ENCODE measurements at regions of chr10 and their contacts with region 1.

Region 1: GRCh38 chr10:95246579-95247051 is 44.2 kb downstream of the PDLIM1 start:
- H3K4me3 ChIP-seq: no peak overlapping the region
- H3K27ac ChIP-seq: no peak overlapping the region
- H3K4me1 ChIP-seq: no peaks in the 10 kb centered on the region
- CTCF ChIP-seq: peak; percentile 69

Region 2: DNA sequence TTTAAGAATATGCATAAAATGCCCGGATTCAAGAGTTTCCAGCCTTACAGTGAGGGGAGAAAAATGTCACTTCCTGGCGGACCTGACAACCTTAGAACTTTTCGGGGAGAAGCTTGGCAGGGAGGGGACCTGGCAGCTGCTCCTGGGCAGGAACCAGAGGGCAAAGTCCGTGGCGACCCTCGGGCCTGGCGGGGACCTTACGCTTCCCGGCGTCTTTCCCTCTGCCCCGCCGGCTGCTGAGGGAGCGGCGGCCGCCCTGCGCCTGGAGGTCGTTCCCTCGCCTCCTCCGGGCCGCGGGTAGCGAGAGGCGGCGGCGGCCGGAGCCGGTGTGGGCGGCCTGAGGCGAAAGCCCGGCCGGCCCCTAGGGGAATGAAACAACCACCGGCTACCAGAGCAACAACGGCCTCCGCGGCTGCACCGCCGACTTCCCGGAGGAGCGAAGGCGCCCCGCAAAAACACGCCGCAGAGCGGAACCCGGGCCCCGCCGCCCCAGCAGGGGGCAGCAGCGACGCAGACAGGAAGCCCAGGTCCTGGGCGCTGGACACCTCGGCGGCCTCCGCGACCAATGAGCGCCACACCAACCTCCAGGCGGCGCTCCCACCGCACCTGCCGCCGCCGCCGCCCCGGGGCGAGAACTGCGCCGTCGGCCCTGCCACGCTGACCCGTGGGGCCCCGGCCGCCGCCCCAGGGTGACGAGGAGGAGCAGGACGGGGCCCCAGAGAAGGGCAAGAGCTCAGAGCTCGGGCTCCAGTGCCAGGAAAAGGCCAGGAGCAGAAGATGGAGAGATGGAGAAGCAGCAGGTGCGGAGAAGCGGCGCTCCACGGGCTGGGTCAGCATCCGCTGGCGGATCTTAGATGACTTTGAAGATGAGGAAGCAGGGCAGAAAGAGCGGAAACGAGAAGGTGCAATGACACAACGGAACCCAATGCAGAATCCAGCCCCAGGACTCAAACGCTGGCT is 63.1 kb before region 1 on chr10:
- CTCF ChIA-PET with region 1: interaction called, 13 read pairs
- POLR2A ChIA-PET with region 1: no interaction called
- H3K4me3 ChIP-seq: peak overlapping the region; percentile 64
- H3K27ac ChIP-seq: peak overlapping the region; percentile 68; the same call in 1 of the 2 replicates
- H3K4me1 ChIP-seq: no peaks in the 10 kb centered on the region
- CTCF ChIP-seq: peak; percentile 98

Region 3: DNA sequence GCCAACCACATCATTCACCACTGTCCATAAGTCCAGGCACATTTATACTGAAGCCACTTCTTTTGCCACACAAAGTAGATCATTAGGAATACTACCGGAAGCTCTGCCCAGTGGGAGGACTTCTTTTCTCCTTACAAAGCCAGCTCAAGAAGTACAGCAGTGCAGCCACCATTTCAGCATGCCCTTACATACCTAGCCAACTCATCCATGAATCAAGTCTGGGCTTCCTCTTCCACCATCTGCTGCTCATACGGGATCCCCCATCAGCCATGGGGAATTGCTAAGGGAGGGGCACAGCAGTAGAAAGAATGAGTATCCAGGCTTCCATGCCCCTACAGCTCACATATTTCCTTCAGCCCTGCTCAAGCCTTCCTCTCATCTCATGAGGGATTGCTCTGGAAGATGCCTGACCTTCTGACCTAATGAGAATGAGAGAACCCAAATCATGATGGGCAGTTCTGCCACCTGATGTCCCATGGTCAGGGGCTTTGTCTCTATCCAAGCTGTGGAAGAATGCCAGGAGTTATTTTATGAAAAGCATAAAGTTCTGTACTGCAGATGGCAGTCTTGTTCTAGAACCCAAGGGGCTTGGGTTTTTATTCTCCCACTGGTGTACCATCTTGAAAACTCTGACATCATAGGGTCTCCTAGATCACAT is 13.1 kb before region 1 on chr10:
- CTCF ChIA-PET with region 1: interaction called, 13 read pairs
- POLR2A ChIA-PET with region 1: no interaction called
- H3K4me3 ChIP-seq: no peak overlapping the region
- H3K27ac ChIP-seq: no peak overlapping the region
- H3K4me1 ChIP-seq: no peaks in the 10 kb centered on the region
- CTCF ChIP-seq: no peak

Region 4: GRCh38 chr10:95295031-95295755 is 48.6 kb after region 1 on chr10:
- CTCF ChIA-PET with region 1: interaction called, 10 read pairs
- POLR2A ChIA-PET with region 1: interaction called, 3 read pairs
- H3K4me3 ChIP-seq: no peak overlapping the region
- H3K27ac ChIP-seq: peak overlapping the region; percentile 2; the same call in 1 of the 2 replicates
- H3K4me1 ChIP-seq: peaks cover 3% of the 10 kb centered on the region
- CTCF ChIP-seq: no peak

Region 5: GRCh38 chr10:95474228-95475002 is 227.8 kb after region 1 on chr10:
- CTCF ChIA-PET with region 1: no interaction called
- POLR2A ChIA-PET with region 1: no interaction called
- H3K4me3 ChIP-seq: no peak overlapping the region
- H3K27ac ChIP-seq: peak overlapping the region; percentile 18
- H3K4me1 ChIP-seq: peaks cover 26% of the 10 kb centered on the region
- CTCF ChIP-seq: no peak